HEK293 (cell line): ENCODE measurements at regions of chr3 and their contacts with region 1.

Region 1: GRCh38 chr3:157201648-157202278 is 41.8 kb upstream of the CCNL1 start:
- H3K4me3 ChIP-seq: no peak overlapping the region
- H3K27ac ChIP-seq: no peak overlapping the region
- H3K4me1 ChIP-seq: no peaks in the 10 kb centered on the region
- CTCF ChIP-seq: no peak

Region 2: GRCh38 chr3:157174649-157175498 is 26.9 kb before region 1 on chr3:
- CTCF ChIA-PET with region 1: interaction called, 15 read pairs
- POLR2A ChIA-PET with region 1: no interaction called
- H3K4me3 ChIP-seq: peak overlapping the region; percentile 62
- H3K27ac ChIP-seq: peak overlapping the region; percentile 68
- H3K4me1 ChIP-seq: no peaks in the 10 kb centered on the region
- CTCF ChIP-seq: no peak

Region 3: DNA sequence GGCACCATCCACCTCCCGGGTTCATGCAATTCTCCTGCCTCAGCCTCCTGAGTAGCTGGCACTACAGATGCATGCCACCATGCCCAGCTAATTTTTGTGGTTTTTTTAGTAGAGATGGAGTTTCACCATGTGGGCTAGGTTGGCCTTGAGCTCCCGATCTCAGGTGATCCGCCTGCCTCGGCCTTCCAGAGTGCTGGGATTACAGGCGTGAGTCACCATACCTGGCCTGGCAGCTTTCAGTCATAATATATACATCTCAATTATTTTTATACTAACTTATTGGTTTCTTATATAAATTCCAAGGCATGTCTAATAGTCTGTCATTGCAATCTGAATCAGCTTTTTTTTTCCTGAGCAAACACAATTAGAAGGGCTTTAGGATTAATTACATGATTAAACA is 32.2 kb after region 1 on chr3:
- CTCF ChIA-PET with region 1: interaction called, 11 read pairs
- POLR2A ChIA-PET with region 1: no interaction called
- H3K4me3 ChIP-seq: no peak overlapping the region
- H3K27ac ChIP-seq: no peak overlapping the region
- H3K4me1 ChIP-seq: no peaks in the 10 kb centered on the region
- CTCF ChIP-seq: no peak

Region 4: GRCh38 chr3:157239082-157239704 is 37.4 kb after region 1 on chr3:
- CTCF ChIA-PET with region 1: interaction called, 11 read pairs
- POLR2A ChIA-PET with region 1: no interaction called
- H3K4me3 ChIP-seq: no peak overlapping the region
- H3K27ac ChIP-seq: no peak overlapping the region
- H3K4me1 ChIP-seq: no peaks in the 10 kb centered on the region
- CTCF ChIP-seq: no peak